ENCODE measurements at regions of chrX and their contacts with region 1.

Region 1: GRCh38 chrX:132957211-132958090 is 978 bp downstream of the HS6ST2 start:
- DNase-seq: peak; percentile 42 to 72 (median 51)
- H3K4me3 ChIP-seq: peak overlapping the region; percentile 39
- H3K27ac ChIP-seq: peak overlapping the region; percentile 30 to 58
- H3K4me1 ChIP-seq: peaks cover 2% of the 10 kb centered on the region
- H3K27me3 ChIP-seq: no peaks in the 10 kb centered on the region
- CTCF ChIP-seq: no peak
- EP300 ChIP-seq: no peak
- POLR2A ChIP-seq: no peak

Region 2: DNA sequence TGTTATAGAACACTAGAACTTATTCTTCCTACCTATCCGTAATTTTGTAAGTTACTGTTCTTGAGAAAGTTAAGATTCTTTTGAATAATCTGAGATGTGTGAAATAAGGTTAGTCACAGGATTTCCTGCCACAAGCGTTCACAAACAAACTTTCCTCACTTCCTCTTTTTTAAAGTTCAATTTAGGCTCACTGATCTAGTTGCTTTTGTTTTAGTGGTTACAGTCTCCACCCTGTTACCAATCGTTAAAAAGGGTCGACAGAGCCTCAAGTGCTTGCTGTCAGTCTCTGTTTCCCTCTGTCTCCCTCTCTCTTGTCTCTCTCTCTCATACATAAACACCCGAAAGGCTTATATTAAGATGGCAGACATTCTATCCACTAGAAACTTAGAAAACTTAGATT is 970.2 kb before region 1 on chrX:
- intact Hi-C with region 1: no loop called
- DNase-seq: no peak
- H3K4me3 ChIP-seq: no peak overlapping the region
- H3K27ac ChIP-seq: no peak overlapping the region
- H3K4me1 ChIP-seq: no peaks in the 10 kb centered on the region
- H3K27me3 ChIP-seq: no peaks in the 10 kb centered on the region
- CTCF ChIP-seq: no peak
- EP300 ChIP-seq: no peak
- POLR2A ChIP-seq: no peak

Region 3: GRCh38 chrX:132740316-132741123 is 216.9 kb before region 1 on chrX:
- intact Hi-C with region 1: loop called in 1 of 4 experiments (anchors 10 kb)
- DNase-seq: no peak
- H3K4me3 ChIP-seq: no peak overlapping the region
- H3K27ac ChIP-seq: no peak overlapping the region
- H3K4me1 ChIP-seq: peaks cover 1% of the 10 kb centered on the region
- H3K27me3 ChIP-seq: no peaks in the 10 kb centered on the region
- CTCF ChIP-seq: peak in 2 of 3 donors; percentile 22 to 32
- EP300 ChIP-seq: no peak
- POLR2A ChIP-seq: no peak

Region 4: DNA sequence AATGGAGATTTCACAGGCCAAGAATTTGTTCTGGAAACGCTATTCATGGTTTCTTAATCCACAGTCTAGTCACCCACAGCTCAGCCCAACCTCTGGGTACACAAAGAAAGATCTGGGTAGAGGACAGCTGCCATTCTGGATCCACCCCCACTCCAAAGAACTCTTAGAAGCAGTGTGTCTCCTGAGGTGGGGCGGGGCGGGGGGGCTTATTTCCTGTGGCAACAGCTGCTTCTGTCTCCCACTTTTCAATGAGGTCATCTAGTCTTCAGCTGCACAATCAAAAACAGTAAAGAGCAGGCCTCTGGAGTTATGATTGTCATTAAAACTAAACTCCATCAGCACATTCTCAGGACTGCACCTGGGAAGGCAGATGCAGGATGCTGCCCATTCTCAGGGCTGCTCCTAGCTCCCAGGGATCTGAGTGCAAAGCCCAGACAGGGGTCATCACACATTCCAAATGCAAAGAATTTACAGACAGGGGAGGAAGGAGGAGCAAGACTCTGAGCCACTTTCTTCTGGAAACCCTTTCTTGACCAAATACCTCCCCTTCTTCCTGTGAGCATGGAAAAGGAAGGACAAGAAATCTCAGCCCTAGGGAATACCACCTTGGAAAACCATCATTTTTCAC is 206.3 kb before region 1 on chrX:
- intact Hi-C with region 1: loop called in 2 of 4 experiments (anchors 10 kb)
- DNase-seq: no peak
- H3K4me3 ChIP-seq: no peak overlapping the region
- H3K27ac ChIP-seq: no peak overlapping the region
- H3K4me1 ChIP-seq: no peaks in the 10 kb centered on the region
- H3K27me3 ChIP-seq: no peaks in the 10 kb centered on the region
- CTCF ChIP-seq: no peak
- EP300 ChIP-seq: no peak
- POLR2A ChIP-seq: no peak

Region 5: DNA sequence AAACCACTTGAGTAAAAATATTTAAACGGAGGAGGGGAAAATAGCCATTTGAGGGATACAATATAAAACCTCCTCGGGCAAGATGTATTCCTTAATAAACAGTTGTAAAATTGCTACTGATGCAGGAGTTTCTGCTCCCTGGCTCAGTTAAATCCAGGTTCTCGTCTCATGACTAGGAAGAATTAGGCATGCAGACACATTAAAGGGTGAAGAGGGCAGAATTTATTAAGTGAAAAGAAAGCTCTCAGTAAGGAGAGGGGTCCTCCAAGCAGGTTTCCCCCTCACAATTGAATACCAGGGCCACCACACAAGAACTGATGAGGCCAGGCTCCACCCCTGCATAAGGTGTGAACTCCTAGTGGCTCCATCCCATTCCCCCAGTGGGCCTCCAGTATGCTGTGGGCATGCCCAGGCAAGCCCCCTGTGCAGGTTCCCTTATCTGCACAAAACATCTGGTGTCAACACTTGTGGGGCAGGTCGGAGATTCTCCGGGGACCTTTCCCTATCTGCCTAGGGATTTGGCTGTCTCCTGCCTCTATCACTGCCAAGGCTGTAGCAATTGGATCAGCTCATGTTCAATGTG is 79.4 kb before region 1 on chrX:
- intact Hi-C with region 1: no loop called
- DNase-seq: no peak
- H3K4me3 ChIP-seq: no peak overlapping the region
- H3K27ac ChIP-seq: no peak overlapping the region
- H3K4me1 ChIP-seq: peaks cover 5% of the 10 kb centered on the region
- H3K27me3 ChIP-seq: no peaks in the 10 kb centered on the region
- CTCF ChIP-seq: no peak
- EP300 ChIP-seq: no peak
- POLR2A ChIP-seq: no peak

Region 6: GRCh38 chrX:132909643-132910042 is 47.8 kb before region 1 on chrX:
- intact Hi-C with region 1: no loop called
- DNase-seq: no peak
- H3K4me3 ChIP-seq: no peak overlapping the region
- H3K27ac ChIP-seq: no peak overlapping the region
- H3K4me1 ChIP-seq: no peaks in the 10 kb centered on the region
- H3K27me3 ChIP-seq: no peaks in the 10 kb centered on the region
- CTCF ChIP-seq: no peak
- EP300 ChIP-seq: no peak
- POLR2A ChIP-seq: no peak

Measured in ovary (tissue), 10 donors.